ENCODE measurements at regions of chr5 and their contacts with region 1.

Region 1: DNA sequence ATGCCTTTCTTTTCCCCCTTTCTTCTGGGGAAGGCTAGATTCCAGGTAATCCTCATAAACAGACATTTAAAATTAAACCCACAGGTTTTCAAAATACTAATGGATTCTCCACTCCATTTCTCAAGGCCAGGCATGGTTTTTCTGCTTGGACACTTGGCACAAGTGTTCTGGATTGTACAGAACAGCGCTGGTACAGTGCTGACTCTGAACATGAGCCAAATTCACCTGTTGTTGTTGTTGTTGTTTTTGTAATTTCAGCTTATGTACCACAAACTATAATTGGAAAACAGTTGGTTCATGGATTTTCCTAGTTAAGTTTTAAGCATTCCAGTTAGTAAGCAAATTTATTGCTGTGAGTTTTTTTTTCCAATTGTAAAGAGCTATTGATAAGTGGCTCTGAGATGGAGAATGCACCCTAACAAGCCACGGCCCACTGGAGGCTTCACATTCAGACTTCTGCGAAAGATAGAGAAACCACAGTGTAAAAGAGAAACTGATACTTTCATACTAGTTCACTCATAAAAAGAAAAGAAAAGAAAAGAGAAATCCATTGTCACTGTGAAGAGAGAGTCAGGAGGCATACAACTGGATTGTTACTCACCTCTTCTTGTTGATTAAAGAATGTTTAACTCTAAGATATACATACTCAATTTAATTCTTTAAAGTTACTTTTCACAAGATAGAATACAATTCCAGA is 16.2 kb upstream of the ITGA1 start:
- DNase-seq: peak; percentile 19
- H3K4me3 Mint-ChIP-seq: peak overlapping the region; percentile 14
- H3K27ac Mint-ChIP-seq: peak overlapping the region; percentile 47
- H3K4me1 Mint-ChIP-seq: peaks cover 66% of the 10 kb centered on the region
- H3K27me3 Mint-ChIP-seq: peaks cover 5% of the 10 kb centered on the region

Region 2: GRCh38 chr5:52657247-52657645 is 114.2 kb before region 1 on chr5:
- intact Hi-C with region 1: no loop called
- DNase-seq: no peak
- H3K4me3 Mint-ChIP-seq: no peak overlapping the region
- H3K27ac Mint-ChIP-seq: no peak overlapping the region
- H3K4me1 Mint-ChIP-seq: no peaks in the 10 kb centered on the region
- H3K27me3 Mint-ChIP-seq: peaks cover 29% of the 10 kb centered on the region

Region 3: GRCh38 chr5:52725065-52725746 is 46.3 kb before region 1 on chr5:
- intact Hi-C with region 1: loop called (anchors 1 kb)
- DNase-seq: peak; percentile 73
- H3K4me3 Mint-ChIP-seq: peak overlapping the region; percentile 22
- H3K27ac Mint-ChIP-seq: peak overlapping the region; percentile 40
- H3K4me1 Mint-ChIP-seq: peaks cover 61% of the 10 kb centered on the region
- H3K27me3 Mint-ChIP-seq: no peaks in the 10 kb centered on the region

Region 4: GRCh38 chr5:52760695-52761366 is 10.7 kb before region 1 on chr5:
- intact Hi-C with region 1: loop called (anchors 1 kb)
- DNase-seq: no peak
- H3K4me3 Mint-ChIP-seq: no peak overlapping the region
- H3K27ac Mint-ChIP-seq: no peak overlapping the region
- H3K4me1 Mint-ChIP-seq: peaks cover 9% of the 10 kb centered on the region
- H3K27me3 Mint-ChIP-seq: no peaks in the 10 kb centered on the region